ENCODE measurements at regions of chr12 and their contacts with region 1.

Region 1: DNA sequence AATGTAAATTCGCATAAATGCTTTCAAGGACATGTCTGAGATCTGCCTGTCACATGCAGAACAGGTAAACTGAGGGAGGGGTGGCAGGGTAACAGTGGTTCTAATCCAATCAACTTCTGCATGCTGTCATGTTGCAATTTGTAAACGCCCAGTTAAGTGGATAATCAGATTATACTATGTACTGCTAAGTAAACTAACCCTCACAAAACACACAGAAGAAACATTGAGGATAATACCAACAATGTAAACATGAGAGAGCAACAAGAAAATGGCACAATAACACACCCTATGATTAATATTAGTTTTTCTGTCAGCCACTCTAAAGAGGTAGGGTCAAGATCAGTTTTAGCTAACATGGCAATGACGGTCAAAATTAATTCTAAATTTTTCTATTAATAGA is 123.7 kb downstream of the KIF21A start:
- DNase-seq: no peak
- H3K4me3 ChIP-seq: no peak overlapping the region
- H3K4me3 Mint-ChIP-seq: no peak overlapping the region
- H3K27ac Mint-ChIP-seq: no peak overlapping the region
- H3K4me1 ChIP-seq: no peaks in the 10 kb centered on the region
- H3K4me1 Mint-ChIP-seq: no peaks in the 10 kb centered on the region
- H3K27me3 ChIP-seq: no peaks in the 10 kb centered on the region
- H3K27me3 Mint-ChIP-seq: no peaks in the 10 kb centered on the region
- CTCF ChIP-seq: no peak

Region 2: DNA sequence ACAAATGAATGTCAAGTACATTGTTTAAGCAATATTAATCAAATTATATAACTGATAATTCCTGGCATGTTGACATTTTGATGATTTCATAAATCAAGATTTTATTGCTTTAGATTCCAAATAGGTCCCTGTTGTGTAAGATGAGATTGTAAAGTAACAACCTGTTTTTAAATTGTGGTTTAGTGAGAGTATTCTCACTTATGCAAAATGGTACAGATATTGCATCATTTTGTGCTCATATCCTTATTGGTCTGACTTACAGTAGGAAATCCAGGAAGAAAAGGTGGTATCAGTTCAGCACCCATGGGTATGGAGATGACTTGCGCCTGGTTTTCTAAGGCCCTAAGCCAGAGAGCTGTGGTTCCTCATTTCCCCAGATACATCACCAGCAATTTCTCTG is 41.8 kb before region 1 on chr12:
- CTCF ChIA-PET with region 1: no interaction called
- POLR2A ChIA-PET with region 1: no interaction called
- intact Hi-C with region 1: no loop called
- DNase-seq: no peak
- H3K4me3 ChIP-seq: no peak overlapping the region
- H3K4me3 Mint-ChIP-seq: no peak overlapping the region
- H3K27ac Mint-ChIP-seq: no peak overlapping the region
- H3K4me1 ChIP-seq: no peaks in the 10 kb centered on the region; the same call in 1 of the 2 replicates
- H3K4me1 Mint-ChIP-seq: peaks cover 9% of the 10 kb centered on the region
- H3K27me3 ChIP-seq: no peaks in the 10 kb centered on the region
- H3K27me3 Mint-ChIP-seq: no peaks in the 10 kb centered on the region
- CTCF ChIP-seq: no peak

Region 3: GRCh38 chr12:39476118-39476517 is 156.9 kb after region 1 on chr12:
- CTCF ChIA-PET with region 1: no interaction called
- POLR2A ChIA-PET with region 1: no interaction called
- intact Hi-C with region 1: loop called (anchors 10 kb)
- DNase-seq: no peak
- H3K4me3 ChIP-seq: no peak overlapping the region
- H3K4me3 Mint-ChIP-seq: no peak overlapping the region
- H3K27ac Mint-ChIP-seq: no peak overlapping the region
- H3K4me1 ChIP-seq: no peaks in the 10 kb centered on the region; the same call in 1 of the 2 replicates
- H3K4me1 Mint-ChIP-seq: peaks cover 7% of the 10 kb centered on the region
- H3K27me3 ChIP-seq: no peaks in the 10 kb centered on the region
- H3K27me3 Mint-ChIP-seq: peaks cover 3% of the 10 kb centered on the region
- CTCF ChIP-seq: no peak

Region 4: GRCh38 chr12:39503445-39503844 is 184.3 kb after region 1 on chr12:
- CTCF ChIA-PET with region 1: no interaction called
- POLR2A ChIA-PET with region 1: no interaction called
- intact Hi-C with region 1: loop called (anchors 10 kb)
- DNase-seq: no peak
- H3K4me3 ChIP-seq: no peak overlapping the region
- H3K4me3 Mint-ChIP-seq: no peak overlapping the region
- H3K27ac Mint-ChIP-seq: no peak overlapping the region
- H3K4me1 ChIP-seq: no peaks in the 10 kb centered on the region
- H3K4me1 Mint-ChIP-seq: no peaks in the 10 kb centered on the region
- H3K27me3 ChIP-seq: no peaks in the 10 kb centered on the region
- H3K27me3 Mint-ChIP-seq: no peaks in the 10 kb centered on the region
- CTCF ChIP-seq: peak in 1 of 2 experiments; percentile 19

Region 5: GRCh38 chr12:39553471-39553870 is 234.3 kb after region 1 on chr12:
- CTCF ChIA-PET with region 1: no interaction called
- POLR2A ChIA-PET with region 1: no interaction called
- intact Hi-C with region 1: loop called (anchors 1 kb)
- DNase-seq: no peak
- H3K4me3 ChIP-seq: no peak overlapping the region
- H3K4me3 Mint-ChIP-seq: no peak overlapping the region
- H3K27ac Mint-ChIP-seq: no peak overlapping the region
- H3K4me1 ChIP-seq: no peaks in the 10 kb centered on the region
- H3K4me1 Mint-ChIP-seq: no peaks in the 10 kb centered on the region
- H3K27me3 ChIP-seq: no peaks in the 10 kb centered on the region
- H3K27me3 Mint-ChIP-seq: peaks cover 2% of the 10 kb centered on the region
- CTCF ChIP-seq: no peak

Region 6: DNA sequence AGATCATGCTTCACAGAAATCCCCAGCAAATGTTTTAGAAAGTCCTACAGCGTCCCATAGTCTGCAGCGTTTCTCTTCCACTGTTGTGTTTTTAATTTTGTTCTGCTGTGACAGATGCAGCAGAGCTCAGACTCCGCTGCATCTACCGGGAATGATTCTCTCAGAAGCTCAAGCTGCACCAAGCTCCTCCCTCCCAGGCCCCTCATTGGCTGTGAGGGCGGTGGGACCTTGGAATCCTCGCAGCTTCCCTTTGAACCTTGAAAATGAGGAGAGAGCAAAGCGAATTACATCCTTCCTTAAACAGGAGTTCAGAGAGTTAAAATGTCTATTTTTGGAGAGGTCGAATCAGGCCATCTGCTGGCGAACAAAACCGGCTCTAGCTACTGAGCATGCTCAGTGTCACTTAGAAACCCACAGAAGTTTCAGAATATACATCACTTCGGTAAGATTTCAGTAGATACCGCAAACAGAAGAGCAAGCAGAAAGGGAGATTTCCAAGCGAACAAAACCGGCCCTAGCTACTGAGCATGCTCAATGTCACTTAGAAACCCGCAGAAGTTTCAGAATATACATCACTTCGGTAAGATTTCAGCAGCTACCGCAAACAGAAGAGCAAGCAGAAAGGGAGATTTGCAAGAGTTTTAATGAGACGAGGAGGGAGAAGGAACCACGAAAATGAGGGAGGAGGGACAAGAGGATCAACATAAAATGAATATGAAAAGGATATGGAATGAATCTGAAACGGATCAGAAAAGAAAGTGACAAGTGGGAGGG is 300.7 kb after region 1 on chr12 and contains the start of gene ABCD2:
- CTCF ChIA-PET with region 1: no interaction called
- POLR2A ChIA-PET with region 1: no interaction called
- intact Hi-C with region 1: loop called (anchors 10 kb)
- DNase-seq: peak; percentile 66 to 67
- H3K4me3 ChIP-seq: peak within 1 kb of the TSS; percentile 34
- H3K4me3 Mint-ChIP-seq: no peak within 1 kb of the TSS
- H3K27ac Mint-ChIP-seq: no peak within 1 kb of the TSS
- H3K4me1 ChIP-seq: 0 out of 2 replicates have a peak, but pooled peaks cover 3% of the 10 kb centered on the region
- H3K4me1 Mint-ChIP-seq: no peaks in the 10 kb centered on the region
- H3K27me3 ChIP-seq: no peaks in the 10 kb centered on the region
- H3K27me3 Mint-ChIP-seq: no peaks in the 10 kb centered on the region
- CTCF ChIP-seq: no peak
- total RNA-seq, gene ABCD2: not detected in 2 replicates